GM12878 (cell line): ENCODE measurements at regions of chr1 and their contacts with region 1.

Region 1: DNA sequence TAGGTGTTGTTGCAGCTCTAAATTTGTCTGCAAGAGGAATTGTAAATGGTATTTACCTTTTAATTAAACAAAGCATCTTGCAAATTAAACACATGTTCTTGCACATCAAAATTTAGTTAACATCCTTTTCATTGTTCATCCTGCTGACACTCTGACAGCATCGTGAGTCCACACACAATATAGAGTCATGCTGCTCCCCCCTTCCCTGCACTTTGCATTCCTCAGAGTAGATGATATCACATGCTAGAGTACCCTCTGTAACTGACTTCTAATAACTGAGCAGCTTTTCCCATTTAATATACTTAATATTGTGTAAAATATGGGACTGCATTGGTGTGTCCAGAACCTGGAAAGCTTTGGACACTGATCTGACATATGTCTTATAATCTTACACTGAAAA is 138.8 kb upstream of the DPYD start:
- DNase-seq: no peak
- ATAC-seq: no peak
- H3K4me3 ChIP-seq: no peak overlapping the region
- H3K27ac ChIP-seq: no peak overlapping the region
- H3K4me1 ChIP-seq: no peaks in the 10 kb centered on the region
- H3K27me3 ChIP-seq: no peaks in the 10 kb centered on the region
- CTCF ChIP-seq: no peak
- EP300 ChIP-seq: no peak
- POLR2A ChIP-seq: no peak
- RAD21 ChIP-seq: no peak

Region 2: GRCh38 chr1:96973605-96974004 is 1086.0 kb before region 1 on chr1:
- CTCF ChIA-PET with region 1: interaction called, 4 read pairs
- POLR2A ChIA-PET with region 1: no interaction called
- RAD21 ChIA-PET with region 1: no interaction called
- SMC1A ChIA-PET with region 1: no interaction called
- in situ Hi-C with region 1: loop called (anchors 5 kb)
- intact Hi-C with region 1: no loop called
- DNase-seq: no peak
- ATAC-seq: no peak
- H3K4me3 ChIP-seq: no peak overlapping the region
- H3K27ac ChIP-seq: no peak overlapping the region
- H3K4me1 ChIP-seq: no peaks in the 10 kb centered on the region
- H3K27me3 ChIP-seq: no peaks in the 10 kb centered on the region
- CTCF ChIP-seq: no peak
- EP300 ChIP-seq: no peak
- POLR2A ChIP-seq: no peak
- RAD21 ChIP-seq: no peak